Right cardiac atrium (tissue), 5 donors: ENCODE measurements at regions of chr9 and their contacts with region 1.

Region 1: GRCh38 chr9:69971643-69972449 is 71.8 kb upstream of the MAMDC2 start:
- DNase-seq: peak; percentile 75 to 92 (median 86)
- ATAC-seq: peak; percentile 78 to 84
- H3K4me3 ChIP-seq: no peak overlapping the region
- H3K27ac ChIP-seq: no peak overlapping the region
- H3K4me1 ChIP-seq: no peaks in the 10 kb centered on the region
- H3K27me3 ChIP-seq: no peaks in the 10 kb centered on the region

Region 2: GRCh38 chr9:69829484-69829883 is 142.4 kb before region 1 on chr9:
- intact Hi-C with region 1: no loop called
- DNase-seq: no peak
- ATAC-seq: no peak
- H3K4me3 ChIP-seq: no peak overlapping the region
- H3K27ac ChIP-seq: no peak overlapping the region
- H3K4me1 ChIP-seq: no peaks in the 10 kb centered on the region
- H3K27me3 ChIP-seq: no peaks in the 10 kb centered on the region

Region 3: DNA sequence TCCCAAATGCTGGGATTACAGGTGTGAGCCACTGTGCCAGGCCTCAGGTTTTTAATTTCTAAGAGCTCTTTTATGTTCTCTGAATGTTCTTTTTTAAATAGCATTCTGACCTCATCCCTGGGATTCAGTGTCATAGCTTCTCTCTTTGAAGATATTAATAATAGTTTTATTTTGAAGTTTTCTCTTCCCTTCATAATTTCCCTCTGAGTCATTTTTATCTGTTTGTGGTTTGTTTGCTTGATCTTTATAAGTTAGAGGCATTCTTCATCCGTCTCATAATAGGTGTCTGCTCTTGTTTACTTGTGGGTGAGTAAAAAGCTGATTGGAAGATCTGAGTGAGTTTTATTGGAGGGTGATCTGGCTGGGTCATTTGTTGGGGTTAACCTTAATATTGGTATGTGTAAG is 59.3 kb after region 1 on chr9:
- intact Hi-C with region 1: no loop called
- DNase-seq: no peak
- ATAC-seq: no peak
- H3K4me3 ChIP-seq: no peak overlapping the region
- H3K27ac ChIP-seq: no peak overlapping the region
- H3K4me1 ChIP-seq: no peaks in the 10 kb centered on the region
- H3K27me3 ChIP-seq: no peaks in the 10 kb centered on the region

Region 4: DNA sequence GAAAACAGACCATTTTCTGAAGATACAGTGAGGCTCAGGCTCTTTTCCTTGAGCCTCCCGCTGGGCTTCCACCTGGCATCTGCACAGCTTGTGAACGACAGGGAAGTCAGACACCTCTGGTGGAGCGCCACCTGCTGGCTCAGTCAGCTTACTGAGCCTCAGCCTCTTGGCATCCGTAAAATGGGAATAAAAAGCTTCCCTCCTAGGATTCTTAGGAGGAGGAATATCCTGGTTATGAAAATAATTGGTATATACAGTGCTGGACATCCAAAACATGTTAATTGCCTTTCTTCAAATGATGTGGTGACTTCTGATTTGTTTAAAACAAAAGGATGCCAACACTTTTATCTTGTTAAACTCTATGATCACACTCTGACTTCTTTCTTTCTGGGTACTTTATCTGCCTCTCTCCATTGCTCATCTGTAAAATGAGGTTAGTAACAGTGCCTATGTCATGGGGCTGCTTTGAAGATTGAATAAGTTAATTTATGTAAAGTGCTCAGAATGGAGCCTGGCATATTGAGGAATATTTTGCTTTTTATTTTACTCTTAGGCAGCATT is 139.3 kb after region 1 on chr9:
- intact Hi-C with region 1: loop called (anchors 2 to 5 kb)
- DNase-seq: peak; percentile 88 to 96 (median 92)
- ATAC-seq: peak; percentile 81 to 88
- H3K4me3 ChIP-seq: no peak overlapping the region
- H3K27ac ChIP-seq: no peak overlapping the region
- H3K4me1 ChIP-seq: peaks cover 5% of the 10 kb centered on the region
- H3K27me3 ChIP-seq: no peaks in the 10 kb centered on the region

Region 5: GRCh38 chr9:70229579-70229978 is 257.7 kb after region 1 on chr9:
- intact Hi-C with region 1: loop called in 2 of 4 experiments (anchors 5 kb)
- DNase-seq: no peak
- ATAC-seq: peak in 1 of 2 donors; percentile 46
- H3K4me3 ChIP-seq: no peak overlapping the region
- H3K27ac ChIP-seq: peak overlapping the region; percentile 51
- H3K4me1 ChIP-seq: no peaks in the 10 kb centered on the region
- H3K27me3 ChIP-seq: no peaks in the 10 kb centered on the region